ENCODE measurements at regions of chr1 and their contacts with region 1.

Region 1: DNA sequence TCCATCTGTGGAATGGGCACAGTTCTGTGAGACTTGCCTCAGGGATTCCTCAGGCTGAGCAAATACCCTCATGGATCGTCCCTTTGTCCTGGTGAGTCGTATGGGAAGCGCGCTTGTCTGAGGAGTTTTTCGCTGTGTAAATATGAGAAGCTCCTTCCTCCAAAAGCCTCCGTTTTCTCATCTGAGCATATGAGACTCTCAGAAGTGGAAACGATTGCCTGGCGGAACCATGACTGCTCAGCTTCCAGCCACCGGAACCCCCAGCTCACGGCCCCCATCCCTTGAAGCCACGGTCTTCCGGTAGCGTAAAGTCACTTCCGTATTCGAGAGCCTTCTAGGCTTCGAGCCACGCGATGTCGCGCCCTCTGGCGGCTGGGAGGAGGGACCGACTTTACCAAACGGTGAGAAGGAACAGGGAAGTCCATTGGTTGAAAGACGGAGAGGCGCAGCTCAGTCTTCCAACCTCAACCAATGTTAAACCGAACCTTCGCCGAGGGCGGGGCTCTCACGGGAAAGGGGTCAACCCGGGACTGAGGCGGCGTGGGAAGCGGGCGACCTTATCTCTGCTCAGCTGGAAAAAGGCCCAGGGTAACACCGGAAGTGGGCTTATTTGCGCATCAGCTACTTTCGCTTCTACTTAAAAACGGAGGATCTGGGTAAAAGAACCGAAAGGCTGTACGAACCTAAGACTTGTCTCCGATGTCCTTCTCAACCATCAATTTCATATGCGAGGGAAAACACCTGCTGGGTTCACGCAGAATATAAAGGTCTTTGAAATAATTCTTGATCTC is 46.2 kb downstream of the AZIN2 start:
- DNase-seq: peak; percentile 99
- H3K4me3 Mint-ChIP-seq: peak overlapping the region; percentile 93
- H3K27ac Mint-ChIP-seq: peak overlapping the region; percentile 94
- H3K4me1 Mint-ChIP-seq: peaks cover 55% of the 10 kb centered on the region
- H3K27me3 Mint-ChIP-seq: peaks cover 5% of the 10 kb centered on the region

Region 2: DNA sequence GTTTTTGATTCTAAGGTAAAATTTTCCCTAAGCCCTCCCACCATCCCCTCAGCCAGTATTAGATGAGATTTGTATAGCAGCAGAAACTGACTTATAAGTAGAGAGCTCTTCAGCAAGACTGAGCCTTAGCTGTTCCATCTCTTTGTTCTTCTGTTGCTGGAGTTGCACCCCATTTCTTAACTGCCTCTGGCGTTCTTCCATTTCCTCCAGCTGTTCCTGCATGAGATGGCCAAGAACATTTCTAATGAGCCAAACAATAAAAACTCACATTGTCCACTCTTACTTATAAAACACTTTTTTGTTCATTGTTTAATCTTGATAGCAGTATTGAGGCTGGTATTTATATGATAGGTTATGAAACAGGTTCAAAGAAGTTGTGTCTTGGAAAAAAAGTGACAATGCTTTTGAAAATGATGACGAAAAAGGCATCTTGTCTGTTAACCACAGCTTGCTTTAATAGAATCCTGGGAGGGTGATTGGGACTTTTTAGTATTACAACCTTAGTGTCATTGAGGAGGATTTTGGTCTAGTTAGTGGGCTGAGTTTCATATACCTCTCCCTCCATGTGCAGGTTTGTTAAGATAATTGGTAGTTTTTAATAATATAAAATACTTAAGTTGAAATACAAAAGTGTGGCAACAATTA is 442.9 kb before region 1 on chr1:
- CTCF ChIA-PET with region 1: no interaction called
- DNase-seq: no peak
- H3K4me3 Mint-ChIP-seq: no peak overlapping the region
- H3K27ac Mint-ChIP-seq: no peak overlapping the region
- H3K4me1 Mint-ChIP-seq: no peaks in the 10 kb centered on the region
- H3K27me3 Mint-ChIP-seq: no peaks in the 10 kb centered on the region

Region 3: GRCh38 chr1:33086384-33086850 is 40.8 kb before region 1 on chr1:
- CTCF ChIA-PET with region 1: interaction called, 13 read pairs
- DNase-seq: peak; percentile 64
- H3K4me3 Mint-ChIP-seq: no peak overlapping the region
- H3K27ac Mint-ChIP-seq: no peak overlapping the region
- H3K4me1 Mint-ChIP-seq: peaks cover 39% of the 10 kb centered on the region
- H3K27me3 Mint-ChIP-seq: peaks cover 29% of the 10 kb centered on the region

Region 4: GRCh38 chr1:33094971-33095604 is 32.1 kb before region 1 on chr1:
- CTCF ChIA-PET with region 1: interaction called, 19 read pairs
- DNase-seq: no peak
- H3K4me3 Mint-ChIP-seq: no peak overlapping the region
- H3K27ac Mint-ChIP-seq: no peak overlapping the region
- H3K4me1 Mint-ChIP-seq: peaks cover 63% of the 10 kb centered on the region
- H3K27me3 Mint-ChIP-seq: peaks cover 5% of the 10 kb centered on the region